ENCODE measurements at regions of chr14 and their contacts with region 1.

Region 1: GRCh38 chr14:99604283-99604765 is 317 bp upstream of the CCDC85C start:
- DNase-seq: peak; percentile 95 to 96
- ATAC-seq: peak; percentile 97
- H3K4me3 ChIP-seq: peak overlapping the region; percentile 74
- H3K27ac ChIP-seq: peak overlapping the region in 1 of 2 donors; percentile 36
- H3K4me1 ChIP-seq: no peaks in the 10 kb centered on the region
- H3K27me3 ChIP-seq: no peaks in the 10 kb centered on the region

Region 2: DNA sequence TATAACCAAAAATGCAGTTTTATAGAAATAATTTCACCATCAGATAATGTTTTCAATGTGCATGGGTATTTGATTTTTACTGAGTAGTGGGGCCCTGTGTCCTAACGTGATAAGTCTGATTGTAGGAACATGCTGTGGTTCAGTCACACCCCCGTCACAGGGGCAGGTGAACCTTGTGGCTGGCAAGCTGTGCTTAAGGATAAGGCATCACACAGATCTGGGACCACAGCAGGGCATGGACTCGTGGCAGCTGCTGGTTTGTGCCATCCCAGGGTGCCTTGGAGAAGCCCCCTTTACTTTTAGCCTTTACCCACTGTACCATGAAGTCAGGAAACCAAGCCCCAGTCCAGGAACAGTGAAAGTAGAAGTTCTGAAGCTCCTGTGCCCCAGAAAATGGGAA is 106.4 kb before region 1 on chr14:
- intact Hi-C with region 1: no loop called
- DNase-seq: no peak
- ATAC-seq: no peak
- H3K4me3 ChIP-seq: no peak overlapping the region
- H3K27ac ChIP-seq: no peak overlapping the region
- H3K4me1 ChIP-seq: no peaks in the 10 kb centered on the region
- H3K27me3 ChIP-seq: no peaks in the 10 kb centered on the region

Region 3: DNA sequence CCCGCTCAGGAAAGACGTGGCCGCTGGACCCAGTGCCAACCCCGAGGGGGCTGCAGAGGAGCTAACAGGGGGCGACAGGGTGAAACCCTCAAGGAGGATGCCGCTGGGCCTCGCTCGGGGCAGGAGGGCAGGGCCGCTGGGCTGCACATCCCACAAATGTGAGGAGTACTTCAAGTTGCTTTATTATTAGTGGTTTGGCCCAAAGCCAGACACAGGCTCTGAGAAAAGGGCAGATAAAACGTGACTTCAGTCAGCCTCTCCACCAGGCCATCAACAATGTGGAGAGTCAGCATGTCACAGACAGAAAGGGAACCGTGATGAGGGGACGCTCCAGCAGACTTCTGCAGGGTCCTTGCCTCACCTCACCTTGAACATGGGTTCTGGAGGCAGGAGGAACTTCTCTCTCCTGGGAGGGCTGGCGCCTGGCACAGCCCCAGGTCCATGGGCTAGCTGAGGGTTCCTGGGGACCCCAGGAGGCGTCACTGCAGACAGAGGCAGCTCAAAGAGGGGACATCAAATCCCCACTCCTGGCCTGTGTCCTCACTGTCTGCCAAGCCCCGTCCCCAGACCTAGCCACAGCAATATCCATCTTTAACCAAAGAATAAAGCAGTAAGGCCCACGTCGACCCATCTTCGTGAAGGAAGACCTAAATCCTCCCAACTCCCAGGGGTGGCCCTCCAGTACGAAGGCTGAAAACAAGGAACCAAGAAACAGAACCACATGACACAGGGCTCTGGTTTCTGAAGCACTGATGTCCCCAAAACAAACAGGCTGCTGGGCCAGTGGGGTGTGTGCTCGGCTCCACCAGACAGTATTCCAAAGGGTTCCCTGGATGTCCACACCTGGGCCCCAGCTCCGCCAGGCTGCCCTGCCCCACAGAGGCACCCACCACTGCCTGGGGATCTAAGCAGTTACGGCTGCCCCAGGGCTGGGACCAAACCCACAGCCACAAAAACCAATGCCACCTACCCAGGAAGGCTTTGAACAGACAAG is 35.5 kb before region 1 on chr14:
- intact Hi-C with region 1: loop called in 1 of 2 experiments (anchors 5 kb)
- DNase-seq: no peak
- ATAC-seq: no peak
- H3K4me3 ChIP-seq: no peak overlapping the region
- H3K27ac ChIP-seq: no peak overlapping the region
- H3K4me1 ChIP-seq: no peaks in the 10 kb centered on the region
- H3K27me3 ChIP-seq: no peaks in the 10 kb centered on the region

Measured in aorta (tissue), 5 donors.